PC-9 (cell line): ENCODE measurements at regions of chr10 and their contacts with region 1.

Region 1: DNA sequence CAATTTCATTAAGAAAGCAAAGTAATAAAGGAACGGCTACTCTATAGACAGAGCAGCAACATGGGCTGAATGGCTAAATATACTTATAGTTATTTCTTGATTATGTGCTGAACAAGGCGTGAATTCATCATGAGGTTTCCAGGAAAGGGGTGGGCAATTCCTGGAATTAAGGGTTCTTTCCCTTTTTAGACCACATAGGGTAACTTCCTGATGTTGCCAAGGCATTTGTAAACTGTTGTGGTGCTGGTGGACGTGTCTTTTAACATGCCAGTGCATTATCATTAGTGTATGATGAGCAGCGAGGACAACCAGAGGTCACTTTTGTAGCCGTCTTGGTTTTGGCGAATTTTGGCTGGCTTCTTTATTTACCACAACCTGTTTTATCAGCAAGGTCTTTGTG is 28.5 kb upstream of the ZMYND11 start:
- DNase-seq: no peak
- H3K4me3 ChIP-seq: no peak overlapping the region
- H3K27ac ChIP-seq: no peak overlapping the region
- H3K4me1 ChIP-seq: peaks cover under 1% of the 10 kb centered on the region
- H3K27me3 ChIP-seq: no peaks in the 10 kb centered on the region
- CTCF ChIP-seq: no peak

Region 2: GRCh38 chr10:142371-143059 is 35.8 kb after region 1 on chr10:
- CTCF ChIA-PET with region 1: no interaction called
- POLR2A ChIA-PET with region 1: no interaction called
- intact Hi-C with region 1: no loop called
- DNase-seq: peak in 1 of 2 experiments; percentile 48
- H3K4me3 ChIP-seq: no peak overlapping the region
- H3K27ac ChIP-seq: peak overlapping the region; percentile 12; the same call in 1 of the 2 replicates
- H3K4me1 ChIP-seq: peaks cover 14% of the 10 kb centered on the region
- H3K27me3 ChIP-seq: no peaks in the 10 kb centered on the region
- CTCF ChIP-seq: no peak

Region 3: GRCh38 chr10:317271-317769 is 210.6 kb after region 1 on chr10:
- CTCF ChIA-PET with region 1: no interaction called
- POLR2A ChIA-PET with region 1: no interaction called
- intact Hi-C with region 1: no loop called
- DNase-seq: no peak
- H3K4me3 ChIP-seq: no peak overlapping the region
- H3K27ac ChIP-seq: no peak overlapping the region
- H3K4me1 ChIP-seq: no peaks in the 10 kb centered on the region
- H3K27me3 ChIP-seq: peaks cover 30% of the 10 kb centered on the region
- CTCF ChIP-seq: no peak

Region 4: GRCh38 chr10:338518-339311 is 232.0 kb after region 1 on chr10:
- CTCF ChIA-PET with region 1: no interaction called
- POLR2A ChIA-PET with region 1: interaction called, 16 read pairs
- intact Hi-C with region 1: no loop called
- DNase-seq: peak in 1 of 2 experiments; percentile 49
- H3K4me3 ChIP-seq: no peak overlapping the region
- H3K27ac ChIP-seq: no peak overlapping the region
- H3K4me1 ChIP-seq: no peaks in the 10 kb centered on the region
- H3K27me3 ChIP-seq: no peaks in the 10 kb centered on the region
- CTCF ChIP-seq: no peak